ENCODE measurements at regions of chr6 and their contacts with region 1.

Region 1: GRCh38 chr6:79713701-79714322 is 82.7 kb downstream of the SH3BGRL2 start:
- DNase-seq: no peak
- ATAC-seq: peak in 1 of 2 donors; percentile 46
- H3K4me3 ChIP-seq: no peak overlapping the region
- H3K27ac ChIP-seq: no peak overlapping the region
- H3K4me1 ChIP-seq: peaks cover 0 to 6% of the 10 kb centered on the region in 2 donors
- H3K27me3 ChIP-seq: no peaks in the 10 kb centered on the region
- CTCF ChIP-seq: peak in 4 of 5 experiments; percentile 10 to 66 (median 38)
- POLR2A ChIP-seq: no peak

Region 2: DNA sequence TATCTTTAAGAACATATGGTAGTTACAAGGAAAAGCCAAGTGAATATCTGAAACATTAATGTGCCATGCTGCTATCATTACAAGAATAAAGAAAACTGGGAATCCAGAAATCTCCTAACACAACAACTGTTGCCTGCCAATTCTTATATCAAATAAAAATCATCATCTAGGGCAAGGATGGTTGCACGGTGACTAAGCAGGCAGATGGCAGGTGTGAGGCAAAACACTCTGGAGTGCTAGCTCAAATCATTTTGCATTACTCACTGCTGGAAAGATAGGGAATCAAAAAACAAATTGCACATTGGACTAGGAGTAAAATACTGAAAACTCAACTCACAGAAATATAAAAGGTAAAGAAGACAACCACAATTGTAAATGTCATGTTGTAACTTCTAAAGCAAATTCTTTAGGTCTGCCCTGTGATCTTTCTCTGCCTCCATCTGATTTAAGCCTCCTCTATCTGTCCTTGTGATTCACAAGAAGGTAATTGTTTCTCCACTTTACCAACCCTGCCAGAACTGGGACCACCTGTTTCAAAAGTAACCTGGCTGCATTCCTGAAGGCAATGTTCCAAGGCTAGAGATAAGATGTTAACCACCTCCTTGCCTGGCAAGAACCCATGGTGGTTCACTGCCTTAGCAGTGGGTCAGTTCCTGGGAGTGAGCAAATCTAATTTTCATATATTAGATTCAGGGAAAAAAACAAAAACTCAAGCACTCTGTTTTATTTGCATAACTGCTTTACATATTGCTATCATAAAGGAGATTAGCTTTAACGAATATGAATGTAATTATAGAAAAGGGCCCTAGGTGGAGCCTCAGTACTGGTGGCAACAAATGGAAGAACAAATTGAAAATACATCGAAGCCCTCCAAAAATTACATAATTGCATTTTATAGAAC is 143.4 kb before region 1 on chr6:
- in situ Hi-C with region 1: no loop called
- intact Hi-C with region 1: loop called (anchors 2 kb)
- DNase-seq: no peak
- ATAC-seq: peak; percentile 66 to 83
- H3K4me3 ChIP-seq: peak overlapping the region; percentile 13 to 45 (median 36)
- H3K27ac ChIP-seq: peak overlapping the region in 3 of 4 donors; percentile 9 to 45 (median 43)
- H3K4me1 ChIP-seq: peaks cover 11 to 12% of the 10 kb centered on the region in 2 donors
- H3K27me3 ChIP-seq: no peaks in the 10 kb centered on the region
- CTCF ChIP-seq: peak in 4 of 5 experiments; percentile 27 to 66 (median 56)
- POLR2A ChIP-seq: no peak

Region 3: DNA sequence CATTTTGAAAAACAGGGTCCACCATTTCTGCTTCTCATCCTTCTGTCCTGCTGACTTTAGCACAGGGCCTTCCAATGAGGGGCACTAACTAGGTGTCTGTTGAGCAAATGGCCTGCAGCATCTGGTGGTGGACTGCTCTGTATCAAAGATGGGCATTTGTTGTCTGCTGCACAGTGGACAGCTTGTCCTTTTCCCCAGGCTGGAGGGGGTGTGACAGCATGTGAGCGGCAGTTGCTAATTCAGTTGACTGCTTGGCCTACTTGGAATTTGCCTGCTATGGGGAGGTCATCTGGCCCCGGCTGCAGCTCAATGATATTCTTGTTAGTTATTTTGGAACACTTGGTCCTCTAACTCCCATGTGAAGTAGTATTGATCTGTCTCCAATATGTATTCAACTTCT is 11.0 kb after region 1 on chr6:
- in situ Hi-C with region 1: no loop called
- intact Hi-C with region 1: no loop called
- DNase-seq: peak in 1 of 2 donors; percentile 7
- ATAC-seq: peak in 1 of 2 donors; percentile 56
- H3K4me3 ChIP-seq: no peak overlapping the region
- H3K27ac ChIP-seq: no peak overlapping the region
- H3K4me1 ChIP-seq: no peaks in the 10 kb centered on the region
- H3K27me3 ChIP-seq: no peaks in the 10 kb centered on the region
- CTCF ChIP-seq: no peak
- POLR2A ChIP-seq: no peak

Region 4: GRCh38 chr6:79941489-79942151 is 227.8 kb after region 1 on chr6:
- in situ Hi-C with region 1: no loop called
- intact Hi-C with region 1: no loop called
- DNase-seq: no peak
- ATAC-seq: no peak
- H3K4me3 ChIP-seq: no peak overlapping the region
- H3K27ac ChIP-seq: no peak overlapping the region
- H3K4me1 ChIP-seq: peaks cover 0 to 2% of the 10 kb centered on the region in 2 donors
- H3K27me3 ChIP-seq: peaks cover 15 to 21% (median 16%) of the 10 kb centered on the region in 3 donors
- CTCF ChIP-seq: no peak
- POLR2A ChIP-seq: no peak